Right cardiac atrium (tissue), 5 donors: ENCODE measurements at regions of chr15 and their contacts with region 1.

Region 1: GRCh38 chr15:53589526-53590050 is 169.9 kb downstream of the WDR72 start:
- DNase-seq: no peak
- ATAC-seq: no peak
- H3K4me3 ChIP-seq: no peak overlapping the region
- H3K27ac ChIP-seq: no peak overlapping the region
- H3K4me1 ChIP-seq: no peaks in the 10 kb centered on the region
- H3K27me3 ChIP-seq: no peaks in the 10 kb centered on the region

Region 2: DNA sequence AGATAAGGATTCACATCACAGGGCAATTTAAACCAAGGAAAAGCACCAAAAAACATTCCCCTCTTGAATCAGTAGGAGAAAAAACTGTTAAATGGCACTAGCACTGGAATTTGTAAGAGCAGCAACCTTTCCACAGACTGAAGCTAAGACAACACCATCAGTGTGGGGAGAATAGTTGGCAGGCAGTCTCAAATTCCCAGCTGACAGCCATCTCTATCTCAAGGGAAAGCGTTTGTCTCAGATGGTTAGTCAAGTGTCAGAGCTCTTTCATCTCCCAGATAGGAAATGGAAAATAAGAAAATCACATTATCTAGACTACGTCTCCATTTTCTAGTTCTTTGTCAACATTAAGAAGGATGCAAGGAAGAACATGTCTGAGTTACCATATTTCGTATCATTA is 58.8 kb before region 1 on chr15:
- intact Hi-C with region 1: loop called in 1 of 4 experiments (anchors 10 kb)
- DNase-seq: no peak
- ATAC-seq: no peak
- H3K4me3 ChIP-seq: no peak overlapping the region
- H3K27ac ChIP-seq: no peak overlapping the region
- H3K4me1 ChIP-seq: no peaks in the 10 kb centered on the region
- H3K27me3 ChIP-seq: no peaks in the 10 kb centered on the region